PC-3 (cell line): ENCODE measurements at regions of chr20 and their contacts with region 1.

Region 1: GRCh38 chr20:44080646-44081267 is 106.2 kb downstream of the JPH2 start:
- DNase-seq: peak; percentile 94
- ATAC-seq: peak; percentile 66
- H3K4me3 ChIP-seq: no peak overlapping the region
- H3K27ac ChIP-seq: no peak overlapping the region
- H3K4me1 ChIP-seq: peaks cover 28% of the 10 kb centered on the region
- H3K27me3 ChIP-seq: no peaks in the 10 kb centered on the region
- CTCF ChIP-seq: peak; percentile 99

Region 2: GRCh38 chr20:43537921-43538877 is 542.6 kb before region 1 on chr20:
- CTCF ChIA-PET with region 1: interaction called, 3 read pairs
- POLR2A ChIA-PET with region 1: no interaction called
- intact Hi-C with region 1: loop called (anchors 5 kb)
- DNase-seq: peak; percentile 86
- ATAC-seq: peak; percentile 68
- H3K4me3 ChIP-seq: no peak overlapping the region
- H3K27ac ChIP-seq: no peak overlapping the region
- H3K4me1 ChIP-seq: peaks cover 18% of the 10 kb centered on the region
- H3K27me3 ChIP-seq: no peaks in the 10 kb centered on the region
- CTCF ChIP-seq: peak; percentile 99

Region 3: DNA sequence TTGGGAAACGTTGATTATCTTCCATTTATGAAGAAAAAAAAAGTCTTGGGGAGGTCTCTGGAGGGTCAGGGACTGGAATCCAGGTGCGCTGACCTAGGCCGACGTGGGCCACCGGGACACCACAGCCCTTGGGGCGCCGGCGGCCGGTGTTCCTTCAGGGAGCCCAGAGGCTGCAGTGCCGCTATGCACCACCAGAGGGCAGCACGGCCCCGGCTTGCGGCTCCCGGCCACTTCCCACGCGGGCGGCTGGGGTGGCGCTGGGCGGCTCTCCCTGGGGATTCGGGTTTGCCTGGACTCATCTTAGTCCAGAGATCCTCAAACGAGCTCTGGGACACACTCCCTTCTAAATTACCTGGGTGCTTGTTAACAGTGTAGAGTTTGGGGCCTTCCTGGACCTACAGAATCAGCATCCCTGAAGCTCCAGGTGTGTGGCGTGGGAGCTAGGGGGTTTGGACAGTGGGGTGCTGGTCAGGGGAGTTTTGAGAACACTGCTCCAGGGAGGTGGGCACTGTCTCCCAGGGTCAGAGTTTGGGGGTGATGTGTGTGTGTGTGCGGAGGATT is 330.9 kb before region 1 on chr20:
- CTCF ChIA-PET with region 1: interaction called, 12 read pairs
- POLR2A ChIA-PET with region 1: no interaction called
- intact Hi-C with region 1: loop called (anchors 1 kb)
- DNase-seq: peak; percentile 88
- ATAC-seq: peak; percentile 71
- H3K4me3 ChIP-seq: no peak overlapping the region
- H3K27ac ChIP-seq: no peak overlapping the region
- H3K4me1 ChIP-seq: peaks cover 32% of the 10 kb centered on the region
- H3K27me3 ChIP-seq: no peaks in the 10 kb centered on the region
- CTCF ChIP-seq: peak; percentile 99

Region 4: DNA sequence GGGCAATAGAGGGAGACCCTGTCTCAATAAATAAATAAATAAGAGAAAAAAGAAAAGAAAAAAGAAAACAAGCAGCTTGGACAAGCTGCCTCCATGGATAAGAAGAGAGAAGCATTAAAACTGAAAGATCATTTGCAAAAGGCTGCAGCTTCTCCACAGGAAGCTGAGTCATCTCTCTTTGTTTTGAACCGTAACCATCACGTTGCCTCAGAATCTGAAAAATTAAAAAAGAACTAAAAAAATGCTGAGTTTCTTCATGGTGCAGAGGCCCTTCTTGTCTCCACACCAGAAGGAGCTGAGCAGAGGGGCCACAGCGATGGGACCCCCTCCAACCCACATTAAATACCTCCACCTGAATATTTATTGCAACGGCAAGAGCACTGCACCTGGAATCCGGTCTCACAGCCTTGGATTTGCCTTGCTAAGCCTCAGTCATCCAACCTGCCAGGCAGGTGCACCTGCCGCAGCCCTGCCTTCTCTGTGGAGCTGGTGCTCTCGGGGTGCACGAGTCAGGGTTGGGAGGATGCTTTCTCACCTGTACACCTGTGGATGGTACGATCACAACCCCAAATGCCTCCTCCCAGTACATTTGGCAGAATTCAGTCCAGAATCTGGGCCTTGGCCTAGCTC is 138.0 kb before region 1 on chr20:
- CTCF ChIA-PET with region 1: no interaction called
- POLR2A ChIA-PET with region 1: no interaction called
- intact Hi-C with region 1: loop called (anchors 5 kb)
- DNase-seq: peak; percentile 72
- ATAC-seq: no peak; the same call in none of the 2 replicates
- H3K4me3 ChIP-seq: peak overlapping the region; percentile 40
- H3K27ac ChIP-seq: peak overlapping the region; percentile 60
- H3K4me1 ChIP-seq: peaks cover 57% of the 10 kb centered on the region
- H3K27me3 ChIP-seq: no peaks in the 10 kb centered on the region
- CTCF ChIP-seq: no peak

Region 5: DNA sequence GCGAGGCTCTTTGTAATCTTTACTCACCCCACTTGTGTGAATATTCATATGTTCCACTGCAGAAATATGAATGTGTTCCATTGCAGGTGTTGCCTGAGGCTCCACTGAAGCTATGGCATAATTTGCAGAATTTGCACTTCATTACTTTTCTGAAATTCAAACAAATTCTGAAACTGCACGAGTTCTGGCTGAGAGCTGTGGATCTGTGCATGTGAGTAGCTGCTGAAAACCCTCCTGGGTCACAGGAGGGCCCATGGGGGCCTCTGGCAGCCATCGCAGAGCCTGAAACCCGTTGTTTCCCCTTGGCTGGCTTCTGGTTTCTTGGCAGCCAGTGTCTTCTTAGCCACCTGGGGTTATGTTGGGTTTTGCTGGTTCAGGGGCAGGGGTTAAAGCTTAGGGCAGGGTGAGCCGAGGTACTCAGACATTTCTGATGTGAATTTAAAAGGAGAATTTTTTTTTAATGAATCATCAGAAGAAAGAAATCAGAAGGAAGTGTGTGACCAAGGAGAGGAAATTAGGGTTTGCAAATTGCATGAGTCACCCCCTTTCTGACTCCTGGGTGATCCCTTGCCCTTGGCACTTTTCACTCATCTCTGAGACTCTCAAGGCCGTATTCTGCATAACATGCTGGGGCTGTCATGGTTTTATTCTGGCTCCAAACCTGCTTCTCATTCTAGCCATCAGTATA is 125.6 kb before region 1 on chr20:
- CTCF ChIA-PET with region 1: no interaction called
- POLR2A ChIA-PET with region 1: no interaction called
- intact Hi-C with region 1: loop called (anchors 1 kb)
- DNase-seq: peak; percentile 96
- ATAC-seq: peak; percentile 92
- H3K4me3 ChIP-seq: no peak overlapping the region; the same call in 1 of the 2 replicates
- H3K27ac ChIP-seq: peak overlapping the region; percentile 72
- H3K4me1 ChIP-seq: peaks cover 33% of the 10 kb centered on the region
- H3K27me3 ChIP-seq: no peaks in the 10 kb centered on the region
- CTCF ChIP-seq: no peak

Region 6: GRCh38 chr20:44056010-44056698 is 24.6 kb before region 1 on chr20:
- CTCF ChIA-PET with region 1: interaction called, 5 read pairs
- POLR2A ChIA-PET with region 1: no interaction called
- intact Hi-C with region 1: loop called (anchors 1 kb)
- DNase-seq: peak; percentile 78
- ATAC-seq: peak; percentile 99
- H3K4me3 ChIP-seq: no peak overlapping the region
- H3K27ac ChIP-seq: no peak overlapping the region
- H3K4me1 ChIP-seq: no peaks in the 10 kb centered on the region
- H3K27me3 ChIP-seq: no peaks in the 10 kb centered on the region
- CTCF ChIP-seq: peak; percentile 87